ENCODE measurements at regions of chr1 and their contacts with region 1.

Region 1: GRCh38 chr1:32179443-32180185 is at the start of gene TXLNA:
- DNase-seq: peak; percentile 89
- H3K4me3 Mint-ChIP-seq: peak within 1 kb of the TSS; percentile 96
- H3K27ac Mint-ChIP-seq: peak within 1 kb of the TSS; percentile 93
- H3K4me1 Mint-ChIP-seq: peaks cover 47% of the 10 kb centered on the region
- H3K27me3 Mint-ChIP-seq: no peaks in the 10 kb centered on the region
- total RNA-seq, gene TXLNA: 109 and 110 TPM in 2 replicates

Region 2: GRCh38 chr1:32142446-32143301 is 36.9 kb before region 1 on chr1:
- intact Hi-C with region 1: loop called (anchors 2 kb)
- DNase-seq: no peak
- H3K4me3 Mint-ChIP-seq: no peak overlapping the region
- H3K27ac Mint-ChIP-seq: no peak overlapping the region
- H3K4me1 Mint-ChIP-seq: peaks cover 39% of the 10 kb centered on the region
- H3K27me3 Mint-ChIP-seq: no peaks in the 10 kb centered on the region

Region 3: DNA sequence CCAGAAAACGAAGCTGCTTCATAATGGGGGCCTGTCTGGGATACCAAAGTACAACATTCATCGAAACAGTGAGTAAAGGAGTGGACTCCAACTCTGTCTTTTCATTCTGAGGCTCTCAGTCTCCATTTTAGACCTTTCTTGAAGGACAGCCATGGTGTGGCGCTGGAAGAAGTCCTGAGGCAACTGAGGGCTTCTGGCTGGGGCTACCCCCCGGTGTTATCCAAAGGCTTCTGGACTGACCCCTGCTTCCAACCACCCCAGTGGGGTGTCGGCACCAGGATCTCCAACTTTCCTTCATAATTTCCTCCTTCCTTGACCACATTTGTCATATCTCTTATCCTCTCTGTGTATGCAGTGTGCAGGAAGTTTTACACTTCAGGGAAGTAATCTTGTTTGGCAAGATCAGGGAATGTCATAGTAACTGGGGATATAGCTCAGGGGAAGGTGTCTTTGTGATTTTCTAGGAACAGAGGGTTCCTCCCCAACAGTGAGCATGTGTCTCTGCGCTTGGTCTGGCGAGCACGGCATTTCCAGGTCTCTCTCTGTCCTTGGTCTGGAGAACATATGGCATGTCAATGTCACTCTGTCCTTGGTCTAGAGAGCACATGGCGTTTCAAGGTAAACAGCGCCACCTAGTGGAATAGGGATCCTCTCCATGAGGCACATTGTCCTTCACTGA is 234.0 kb after region 1 on chr1:
- intact Hi-C with region 1: no loop called
- DNase-seq: peak; percentile 62
- H3K4me3 Mint-ChIP-seq: no peak overlapping the region
- H3K27ac Mint-ChIP-seq: no peak overlapping the region
- H3K4me1 Mint-ChIP-seq: peaks cover 4% of the 10 kb centered on the region
- H3K27me3 Mint-ChIP-seq: peaks cover 18% of the 10 kb centered on the region